Psoas muscle (tissue), 8 donors: ENCODE measurements at regions of chr9 and their contacts with region 1.

Region 1: GRCh38 chr9:136944519-136945279 is at the starts of genes C8G and FBXW5:
- DNase-seq: peak; percentile 97 to 98
- ATAC-seq: peak; percentile 62 to 67 (median 66)
- H3K4me3 ChIP-seq: peak within 1 kb of the TSS; percentile 88
- H3K27ac ChIP-seq: peak within 1 kb of the TSS; percentile 94
- H3K4me1 ChIP-seq: peaks cover 40% of the 10 kb centered on the region
- H3K27me3 ChIP-seq: no peaks in the 10 kb centered on the region
- CTCF ChIP-seq: peak; percentile 98
- total RNA-seq, gene C8G: 1.7 to 7.9 (median 5.9) TPM
- total RNA-seq, gene FBXW5: 135 to 236 (median 171) TPM

Region 2: DNA sequence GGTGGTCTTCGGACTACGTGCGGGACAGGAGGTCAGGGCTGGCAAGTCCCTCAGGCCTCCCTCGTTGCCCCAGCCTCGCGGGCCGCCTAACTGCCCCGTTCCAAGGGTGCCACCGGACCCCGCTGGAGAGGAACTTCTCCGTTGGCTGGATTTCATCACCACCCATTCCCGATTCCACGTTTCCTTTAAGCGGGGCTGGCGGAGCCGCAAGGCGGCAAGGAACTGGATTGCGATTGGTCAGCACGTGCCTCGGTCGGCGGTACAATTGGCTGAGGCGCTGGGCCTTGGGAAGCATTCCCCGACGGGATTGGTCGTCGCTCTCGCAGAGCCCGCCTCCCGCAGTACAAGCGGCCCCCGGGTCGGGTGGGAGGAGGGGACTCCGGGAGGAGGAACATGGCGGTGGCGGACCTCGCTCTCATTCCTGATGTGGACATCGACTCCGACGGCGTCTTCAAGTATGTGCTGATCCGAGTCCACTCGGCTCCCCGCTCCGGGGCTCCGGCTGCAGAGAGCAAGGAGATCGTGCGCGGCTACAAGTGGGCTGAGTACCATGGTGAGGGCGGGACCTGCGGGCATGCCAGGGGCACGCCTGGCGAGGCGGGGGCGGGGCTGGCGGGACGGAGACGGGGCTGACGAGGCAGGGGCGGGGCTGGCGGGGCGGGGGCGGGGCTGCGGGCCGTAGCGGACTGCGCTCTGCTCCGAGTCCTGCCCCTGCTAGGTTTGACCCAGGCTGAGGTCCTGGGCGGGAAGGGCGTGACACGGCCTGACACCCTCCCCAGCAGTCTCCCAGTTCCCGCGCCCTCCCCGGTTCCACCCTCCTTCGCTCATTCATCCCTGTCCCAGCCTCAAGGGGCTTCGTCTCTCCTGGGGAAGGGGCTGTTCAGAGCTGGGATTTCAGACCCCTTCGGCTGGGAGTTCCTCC is 95.4 kb before region 1 on chr9 and contains the start of gene PHPT1:
- intact Hi-C with region 1: loop called (anchors 5 kb)
- DNase-seq: peak; percentile 99
- ATAC-seq: peak; percentile 85 to 91 (median 88)
- H3K4me3 ChIP-seq: peak within 1 kb of the TSS; percentile 81
- H3K27ac ChIP-seq: peak within 1 kb of the TSS; percentile 91
- H3K4me1 ChIP-seq: peaks cover 26% of the 10 kb centered on the region
- H3K27me3 ChIP-seq: peaks cover 0 to 20% (median 8%) of the 10 kb centered on the region in 3 donors
- CTCF ChIP-seq: no peak
- total RNA-seq, gene PHPT1: 154 to 272 (median 220) TPM

Region 3: DNA sequence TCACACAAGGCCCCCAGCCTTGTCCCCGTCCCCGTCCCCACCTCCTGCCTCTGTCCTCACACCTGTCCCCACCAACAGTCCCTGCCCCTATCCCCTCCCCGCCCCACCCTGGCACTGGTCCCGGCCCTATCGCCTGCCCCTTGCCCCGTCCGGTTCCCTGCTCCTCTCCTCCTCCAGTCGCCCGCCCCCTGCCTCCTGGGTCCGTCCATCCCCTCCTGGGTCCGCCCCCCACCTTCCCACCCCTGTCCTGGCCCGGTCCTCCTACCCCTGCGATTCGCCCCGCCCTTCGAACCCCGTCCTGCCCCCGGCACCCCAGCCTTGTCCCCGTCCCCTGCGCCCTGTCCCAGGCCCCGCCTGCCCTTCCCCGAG is 79.0 kb before region 1 on chr9:
- intact Hi-C with region 1: loop called in 1 of 2 experiments (anchors 5 kb)
- DNase-seq: peak; percentile 44 to 71
- ATAC-seq: peak in 2 of 4 donors; percentile 37 to 46
- H3K4me3 ChIP-seq: peak overlapping the region; percentile 89
- H3K27ac ChIP-seq: peak overlapping the region; percentile 96
- H3K4me1 ChIP-seq: peaks cover 21% of the 10 kb centered on the region
- H3K27me3 ChIP-seq: no peaks in the 10 kb centered on the region
- CTCF ChIP-seq: no peak

Region 4: GRCh38 chr9:136902259-136902821 is 42.4 kb before region 1 on chr9:
- intact Hi-C with region 1: loop called in 1 of 2 experiments (anchors 5 kb)
- DNase-seq: peak; percentile 59 to 79
- ATAC-seq: peak; percentile 82 to 97 (median 91)
- H3K4me3 ChIP-seq: peak overlapping the region; percentile 42
- H3K27ac ChIP-seq: peak overlapping the region; percentile 92
- H3K4me1 ChIP-seq: peaks cover 25% of the 10 kb centered on the region
- H3K27me3 ChIP-seq: no peaks in the 10 kb centered on the region
- CTCF ChIP-seq: no peak

Region 5: DNA sequence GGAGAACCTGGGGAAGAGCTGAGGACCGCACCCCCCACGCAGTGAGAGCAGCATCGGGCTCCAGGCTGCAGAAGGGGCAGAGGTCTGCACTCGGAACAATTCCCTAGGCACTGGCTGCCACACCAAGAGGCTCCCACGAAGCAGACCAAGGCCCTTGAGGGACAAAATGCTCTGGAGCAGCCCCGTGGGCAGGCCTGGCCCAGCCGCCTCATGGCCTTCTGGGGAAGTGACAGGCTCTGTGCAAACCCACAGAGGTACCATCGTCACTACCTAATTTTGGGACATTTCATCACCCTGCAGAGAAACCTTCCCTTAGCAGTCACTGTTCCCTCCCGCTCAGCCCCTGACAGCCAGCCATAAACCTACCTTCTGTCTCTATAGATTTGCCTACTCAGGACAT is 16.1 kb before region 1 on chr9:
- intact Hi-C with region 1: loop called in 1 of 2 experiments (anchors 2 kb)
- DNase-seq: peak; percentile 68 to 92
- ATAC-seq: peak; percentile 91 to 94 (median 92)
- H3K4me3 ChIP-seq: peak overlapping the region; percentile 55
- H3K27ac ChIP-seq: peak overlapping the region; percentile 98
- H3K4me1 ChIP-seq: peaks cover 63% of the 10 kb centered on the region
- H3K27me3 ChIP-seq: no peaks in the 10 kb centered on the region
- CTCF ChIP-seq: peak; percentile 52

Region 6: GRCh38 chr9:136991993-136992818 is 47.5 kb after region 1 on chr9 and contains the start of gene PAXX:
- intact Hi-C with region 1: loop called in 1 of 2 experiments (anchors 5 kb)
- DNase-seq: peak; percentile 92 to 96
- ATAC-seq: peak; percentile 96 to 97 (median 97)
- H3K4me3 ChIP-seq: peak within 1 kb of the TSS; percentile 89
- H3K27ac ChIP-seq: peak within 1 kb of the TSS; percentile 81
- H3K4me1 ChIP-seq: peaks cover 10% of the 10 kb centered on the region
- H3K27me3 ChIP-seq: peaks cover 0 to 19% (median 17%) of the 10 kb centered on the region in 3 donors
- CTCF ChIP-seq: no peak
- total RNA-seq, gene PAXX: 9.4 to 15.6 (median 12.4) TPM